Right cardiac atrium (tissue), 5 donors: ENCODE measurements at regions of chr22 and their contacts with region 1.

Region 1: DNA sequence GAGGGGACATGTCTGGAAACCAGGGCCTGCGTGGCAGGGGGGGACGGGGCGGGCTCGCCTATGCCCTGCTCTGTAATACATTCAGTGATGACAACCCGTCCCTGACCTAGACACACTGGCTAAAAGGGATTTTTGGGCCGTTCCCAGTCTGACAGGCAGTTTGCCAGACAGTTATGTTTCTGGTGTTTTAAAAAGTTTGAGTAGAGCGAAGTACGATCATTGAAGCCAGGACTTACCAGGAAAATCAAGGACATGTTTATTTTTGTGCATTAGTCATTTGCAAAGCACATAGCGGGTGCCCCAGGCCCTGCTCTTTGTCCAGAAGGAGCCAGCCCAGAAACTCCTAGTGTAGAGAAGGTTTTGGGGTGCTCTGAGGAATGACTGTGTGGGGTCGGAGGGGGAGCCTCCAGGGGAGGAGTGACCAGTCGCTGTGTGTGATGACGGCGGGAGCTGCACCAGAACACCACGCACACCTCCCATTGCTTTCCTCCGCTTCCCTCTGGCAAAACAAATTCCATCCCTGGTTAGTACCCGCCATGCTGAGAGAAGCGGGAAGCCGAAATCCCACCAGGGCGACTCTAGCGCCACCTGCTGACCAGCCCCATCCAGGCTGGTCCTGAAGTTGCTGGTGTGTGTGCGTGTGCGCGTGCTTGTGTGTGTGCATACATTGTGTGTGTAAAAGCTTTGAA is 50.8 kb downstream of the FBLN1 start:
- DNase-seq: peak; percentile 79 to 91 (median 90)
- ATAC-seq: peak; percentile 67 to 73
- H3K4me3 ChIP-seq: no peak overlapping the region
- H3K27ac ChIP-seq: peak overlapping the region; percentile 51
- H3K4me1 ChIP-seq: peaks cover 8% of the 10 kb centered on the region
- H3K27me3 ChIP-seq: no peaks in the 10 kb centered on the region

Region 2: GRCh38 chr22:45435544-45436139 is 117.9 kb before region 1 on chr22:
- intact Hi-C with region 1: loop called (anchors 2 to 10 kb)
- DNase-seq: peak; percentile 87 to 95 (median 94)
- ATAC-seq: peak; percentile 94 to 95
- H3K4me3 ChIP-seq: peak overlapping the region; percentile 35
- H3K27ac ChIP-seq: peak overlapping the region; percentile 70
- H3K4me1 ChIP-seq: peaks cover 4% of the 10 kb centered on the region
- H3K27me3 ChIP-seq: no peaks in the 10 kb centered on the region

Region 3: DNA sequence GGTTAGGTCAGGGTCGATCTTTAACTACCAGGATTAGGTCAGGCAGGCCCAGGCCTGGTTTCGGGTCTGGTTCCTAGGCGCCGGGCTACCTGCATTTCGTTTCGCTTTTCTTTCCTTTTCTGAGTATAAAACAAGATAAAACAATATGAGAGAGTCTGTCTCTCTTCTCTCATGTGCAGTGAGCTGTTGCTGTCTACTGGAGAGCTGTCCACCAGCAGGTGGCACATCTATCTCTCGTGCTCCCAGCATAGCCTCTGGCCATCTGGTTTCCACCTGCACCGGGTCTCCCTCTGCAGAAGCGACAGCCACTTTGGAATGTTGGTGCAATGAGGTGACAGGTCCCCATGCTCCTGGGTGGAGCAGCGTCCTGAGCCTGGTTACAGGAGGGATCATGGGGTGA is 112.4 kb before region 1 on chr22:
- intact Hi-C with region 1: loop called (anchors 2 to 10 kb)
- DNase-seq: peak; percentile 52 to 85 (median 75)
- ATAC-seq: peak; percentile 78 to 88
- H3K4me3 ChIP-seq: no peak overlapping the region
- H3K27ac ChIP-seq: no peak overlapping the region
- H3K4me1 ChIP-seq: no peaks in the 10 kb centered on the region
- H3K27me3 ChIP-seq: no peaks in the 10 kb centered on the region